Panc1 (cell line): ENCODE measurements at regions of chr7 and their contacts with region 1.

Region 1: GRCh38 chr7:44633254-44634186 is 27.1 kb downstream of the OGDH start:
- DNase-seq: no peak
- ATAC-seq: peak; percentile 55
- H3K4me3 ChIP-seq: no peak overlapping the region
- H3K27ac ChIP-seq: peak overlapping the region; percentile 72
- H3K4me1 ChIP-seq: peaks cover 34% of the 10 kb centered on the region
- H3K27me3 ChIP-seq: no peaks in the 10 kb centered on the region
- CTCF ChIP-seq: no peak

Region 2: GRCh38 chr7:44606450-44607254 is 26.9 kb before region 1 on chr7 and contains the start of gene OGDH:
- CTCF ChIA-PET with region 1: interaction called, 13 read pairs
- POLR2A ChIA-PET with region 1: no interaction called
- in situ Hi-C with region 1: no loop called
- intact Hi-C with region 1: no loop called
- DNase-seq: peak; percentile 93
- ATAC-seq: peak; percentile 99
- H3K4me3 ChIP-seq: peak within 1 kb of the TSS; percentile 62 to 95
- H3K27ac ChIP-seq: peak within 1 kb of the TSS; percentile 94
- H3K4me1 ChIP-seq: peaks cover 8% of the 10 kb centered on the region; the same call in 1 of the 2 replicates
- H3K27me3 ChIP-seq: no peaks in the 10 kb centered on the region
- CTCF ChIP-seq: no peak
- total RNA-seq, gene OGDH: 166 TPM

Region 3: DNA sequence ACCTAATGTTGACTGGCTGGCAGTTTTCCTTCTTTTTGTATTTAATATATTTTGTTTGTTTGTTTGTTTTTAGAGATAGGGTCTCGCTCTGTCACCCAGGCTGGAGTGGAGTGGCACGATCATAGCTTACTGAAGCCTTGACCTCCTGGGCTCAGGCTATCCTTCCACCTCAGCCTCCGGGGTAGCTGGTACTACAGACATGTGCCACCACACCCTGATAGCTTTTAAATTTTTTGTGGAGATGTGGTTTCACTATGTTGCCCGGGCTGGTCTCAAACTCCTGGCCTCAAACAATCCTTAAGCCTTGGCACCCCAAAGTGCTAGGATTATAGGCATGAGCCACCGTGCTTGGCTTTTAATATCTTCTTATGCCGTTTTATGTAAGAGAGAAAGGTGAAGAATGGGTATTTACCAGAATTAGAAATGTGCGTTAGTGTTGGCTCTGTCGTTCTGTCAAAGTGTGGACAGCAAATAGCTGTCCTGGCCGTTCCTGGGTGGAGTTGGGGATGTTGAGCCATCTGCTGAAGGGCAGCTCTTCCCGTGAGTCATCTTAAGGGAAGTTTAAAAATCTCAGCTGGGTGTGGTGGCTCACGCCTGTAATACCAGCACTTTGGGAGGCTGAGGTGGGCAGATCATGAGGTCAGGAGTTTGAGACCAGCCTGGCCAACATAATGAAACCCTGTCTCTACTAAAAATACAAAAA is 12.3 kb before region 1 on chr7:
- CTCF ChIA-PET with region 1: no interaction called
- POLR2A ChIA-PET with region 1: interaction called, 15 read pairs
- in situ Hi-C with region 1: no loop called
- intact Hi-C with region 1: no loop called
- DNase-seq: no peak
- ATAC-seq: peak; percentile 68
- H3K4me3 ChIP-seq: peak overlapping the region in 1 of 2 experiments; percentile 19; a peak in 1 of 4 replicates
- H3K27ac ChIP-seq: peak overlapping the region; percentile 73
- H3K4me1 ChIP-seq: peaks cover 55% of the 10 kb centered on the region
- H3K27me3 ChIP-seq: no peaks in the 10 kb centered on the region
- CTCF ChIP-seq: no peak

Region 4: DNA sequence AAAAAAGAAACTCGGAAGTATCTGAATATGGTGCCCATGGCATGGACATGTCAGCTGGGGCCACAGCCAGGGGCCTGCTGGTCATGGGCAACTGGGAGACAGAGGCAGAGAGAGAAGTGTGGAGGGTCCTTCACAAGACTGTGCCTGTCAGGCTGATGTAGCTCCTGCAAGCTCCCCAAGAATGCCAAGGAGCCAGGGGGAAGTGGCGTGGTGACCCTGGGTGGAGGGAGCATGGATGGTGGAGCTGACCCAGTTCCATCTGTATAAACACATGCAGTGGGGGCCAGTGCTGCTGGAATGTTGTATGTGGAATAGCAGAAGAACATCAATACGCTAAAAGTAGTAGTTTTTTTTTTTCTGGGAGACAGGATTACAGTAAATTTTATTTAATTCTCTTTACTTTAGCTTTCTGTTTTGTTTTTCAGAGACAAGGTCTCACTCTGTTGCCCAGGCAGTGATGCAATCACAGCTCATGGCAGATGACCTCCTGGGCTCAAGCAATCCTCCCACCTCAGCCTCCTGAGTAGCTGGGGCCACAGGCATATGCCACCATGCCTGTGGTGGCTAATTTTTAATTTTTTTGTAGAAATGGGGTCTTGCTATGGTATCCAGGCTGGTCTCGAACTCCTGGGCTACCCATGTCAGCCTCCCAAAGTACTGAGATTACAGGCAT is 104.7 kb after region 1 on chr7:
- CTCF ChIA-PET with region 1: interaction called, 4 read pairs
- POLR2A ChIA-PET with region 1: interaction called, 10 read pairs
- in situ Hi-C with region 1: no loop called
- intact Hi-C with region 1: no loop called
- DNase-seq: no peak
- ATAC-seq: no peak
- H3K4me3 ChIP-seq: no peak overlapping the region
- H3K27ac ChIP-seq: no peak overlapping the region
- H3K4me1 ChIP-seq: peaks cover 6% of the 10 kb centered on the region; the same call in 1 of the 2 replicates
- H3K27me3 ChIP-seq: no peaks in the 10 kb centered on the region
- CTCF ChIP-seq: no peak

Region 5: DNA sequence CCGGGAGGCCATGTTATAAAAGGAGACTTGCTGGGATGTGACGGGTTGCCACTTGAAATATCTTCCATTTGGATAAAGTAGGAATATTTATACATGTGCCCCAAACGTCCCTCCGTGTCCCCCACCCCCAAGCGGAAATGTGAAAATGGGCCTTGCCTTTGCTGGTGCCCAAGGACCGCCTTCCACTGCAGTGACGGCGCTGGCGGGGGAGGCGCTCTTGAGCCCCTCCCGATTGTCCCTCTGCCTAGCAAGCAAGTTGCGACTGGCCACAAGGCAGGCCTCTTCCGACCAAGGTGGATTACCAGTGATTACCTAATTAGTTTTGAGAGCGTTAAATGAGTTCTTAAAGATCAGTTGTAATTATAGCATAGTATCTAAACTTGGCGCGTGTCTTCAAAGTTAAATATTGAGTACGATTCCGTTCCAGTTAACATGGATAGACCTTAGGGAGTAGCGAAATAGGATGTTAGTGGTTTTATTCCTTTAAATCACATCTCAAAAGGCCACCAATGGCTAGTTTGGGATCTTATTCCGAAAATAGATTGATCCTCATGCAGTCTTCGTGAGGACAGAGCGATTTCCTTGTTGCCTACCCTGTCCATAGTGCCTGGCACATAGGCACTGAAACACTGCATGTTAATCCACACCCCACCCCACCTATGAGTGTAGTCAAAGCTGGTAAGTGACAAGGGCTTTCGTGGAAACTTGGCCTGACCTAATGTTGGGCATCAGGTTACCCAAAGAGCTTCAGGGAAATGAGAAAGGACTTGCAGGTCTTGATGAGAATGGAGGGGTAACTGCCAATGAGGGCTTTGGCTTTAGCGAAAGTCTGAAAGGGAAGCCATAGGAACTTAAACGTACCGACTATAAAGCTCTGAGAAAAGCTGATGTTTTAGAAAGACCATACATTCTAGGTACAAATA is 164.1 kb after region 1 on chr7:
- CTCF ChIA-PET with region 1: no interaction called
- POLR2A ChIA-PET with region 1: interaction called, 10 read pairs
- in situ Hi-C with region 1: no loop called
- intact Hi-C with region 1: no loop called
- DNase-seq: peak; percentile 69
- ATAC-seq: peak; percentile 74
- H3K4me3 ChIP-seq: peak overlapping the region; percentile 82 to 97
- H3K27ac ChIP-seq: peak overlapping the region; percentile 97
- H3K4me1 ChIP-seq: peaks cover 29% of the 10 kb centered on the region
- H3K27me3 ChIP-seq: no peaks in the 10 kb centered on the region
- CTCF ChIP-seq: no peak; the same call in 1 of the 2 replicates